ENCODE measurements at regions of chr7 and their contacts with region 1.

Region 1: DNA sequence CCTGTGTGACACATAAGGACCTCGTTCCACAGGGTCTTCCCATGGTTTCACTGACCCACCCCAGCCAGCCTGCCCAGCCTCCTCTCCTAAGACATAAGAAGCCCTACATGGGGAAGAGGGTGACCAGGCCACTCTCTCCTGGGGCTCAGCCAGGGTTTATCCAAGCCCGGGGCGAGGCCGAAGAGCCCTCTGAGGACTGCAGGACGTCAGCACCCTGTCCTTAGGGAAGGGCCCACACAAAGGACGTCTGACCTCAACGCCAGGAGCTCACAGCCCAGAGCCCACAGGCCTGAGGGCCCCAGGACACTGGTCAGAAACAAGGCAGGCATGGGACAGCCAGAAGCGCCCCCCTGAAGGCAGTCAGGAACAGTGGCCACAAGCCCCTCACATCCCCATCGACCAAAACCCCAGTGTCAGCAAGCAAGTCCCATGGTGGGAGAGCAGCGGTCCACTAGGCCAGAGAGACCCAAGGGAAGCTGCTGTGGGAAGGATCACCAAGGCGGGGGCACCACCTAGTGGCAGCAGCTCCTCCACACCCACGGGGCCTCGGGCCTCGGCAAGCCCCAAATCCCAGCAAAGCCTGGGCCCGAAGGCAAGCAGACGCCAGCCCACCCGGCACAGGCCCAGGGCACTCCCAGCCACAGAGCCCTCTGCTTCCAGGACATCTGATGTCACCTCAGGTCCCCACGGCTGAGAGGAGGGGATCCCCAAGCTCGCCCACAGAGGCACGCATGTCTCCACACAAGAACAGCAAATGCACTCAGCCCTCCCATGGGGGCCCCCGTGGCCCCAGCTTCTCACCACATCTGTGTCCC is 23.4 kb downstream of the MAD1L1 start:
- ATAC-seq: peak; percentile 78 to 99 (median 96)
- H3K4me3 ChIP-seq: no peak overlapping the region
- H3K27ac ChIP-seq: no peak overlapping the region
- H3K4me1 ChIP-seq: peaks cover 8 to 12% of the 10 kb centered on the region in 2 donors

Region 2: GRCh38 chr7:1569833-1570633 is 639.3 kb before region 1 on chr7 and contains the start of gene PSMG3:
- in situ Hi-C with region 1: loop called in 3 of 9 experiments (anchors 10 to 25 kb)
- ATAC-seq: peak; percentile 53 to 95 (median 93)
- H3K4me3 ChIP-seq: peak within 1 kb of the TSS; percentile 73 to 95 (median 85)
- H3K27ac ChIP-seq: peak within 1 kb of the TSS; percentile 84 to 88
- H3K4me1 ChIP-seq: peaks cover 16% of the 10 kb centered on the region in 2 donors
- total RNA-seq, gene PSMG3: 24.0 to 52.8 (median 44.8) TPM

Region 3: DNA sequence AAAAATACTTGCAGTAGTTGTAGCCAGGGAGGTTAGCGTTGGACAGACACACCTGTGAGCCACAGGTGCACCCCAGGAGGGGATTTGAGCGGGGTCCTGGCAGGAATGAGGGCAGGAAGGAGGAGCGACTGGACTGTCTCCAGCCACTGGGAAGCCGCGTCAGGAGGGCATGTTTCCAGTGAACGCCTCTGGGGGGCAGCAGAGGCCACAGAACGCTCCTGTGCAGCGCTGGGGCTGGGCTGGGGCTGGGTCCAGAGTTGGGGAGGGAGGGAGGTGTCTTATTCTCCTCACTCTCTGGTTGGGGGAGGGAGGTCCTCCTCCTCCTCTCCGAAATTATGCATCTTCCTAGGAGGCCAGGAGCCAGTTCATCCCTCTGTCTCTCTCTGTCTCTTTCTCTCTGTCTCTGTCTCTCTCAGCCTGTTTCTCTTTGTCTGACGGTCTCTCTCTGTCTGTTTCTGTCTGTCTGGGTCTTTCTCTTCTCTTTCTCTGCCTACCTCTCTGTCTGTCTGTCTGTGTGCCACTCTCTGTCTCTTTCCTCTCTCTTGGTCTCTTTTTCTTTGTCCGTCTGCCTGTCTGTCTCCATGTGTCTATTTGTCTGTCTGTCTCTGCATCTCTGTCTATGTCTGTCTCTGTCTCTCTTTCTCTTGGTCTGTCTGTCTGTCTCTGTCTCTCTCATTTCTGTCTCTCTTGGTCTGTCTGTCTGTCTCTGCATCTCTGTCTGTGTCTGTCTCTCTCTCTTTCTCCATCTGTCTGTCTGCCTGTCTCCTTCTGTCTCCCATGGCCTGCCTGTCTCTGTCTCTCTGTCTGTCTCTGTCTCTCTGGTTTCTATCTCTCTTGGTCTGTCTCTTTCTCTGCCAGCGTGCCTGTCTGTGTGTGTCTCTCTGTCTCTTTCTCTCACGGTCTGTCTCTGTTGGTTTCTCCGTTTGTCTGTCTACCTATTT is 629.6 kb before region 1 on chr7:
- in situ Hi-C with region 1: loop called in 3 of 9 experiments (anchors 10 to 25 kb)
- ATAC-seq: peak; percentile 96 to 100 (median 99)
- H3K4me3 ChIP-seq: no peak overlapping the region
- H3K27ac ChIP-seq: no peak overlapping the region
- H3K4me1 ChIP-seq: peaks cover 4 to 12% of the 10 kb centered on the region in 2 donors

Region 4: GRCh38 chr7:1664711-1665548 is 544.4 kb before region 1 on chr7:
- in situ Hi-C with region 1: loop called in 2 of 9 experiments (anchors 25 kb)
- ATAC-seq: peak; percentile 13 to 62 (median 42)
- H3K4me3 ChIP-seq: peak overlapping the region; percentile 54 to 96 (median 83)
- H3K27ac ChIP-seq: peak overlapping the region; percentile 76 to 94
- H3K4me1 ChIP-seq: peaks cover 21 to 26% of the 10 kb centered on the region in 2 donors

Region 5: GRCh38 chr7:2934211-2934731 is 724.9 kb after region 1 on chr7:
- in situ Hi-C with region 1: no loop called
- ATAC-seq: peak in 4 of 8 experiments; percentile 16 to 81 (median 30)
- H3K4me3 ChIP-seq: no peak overlapping the region
- H3K27ac ChIP-seq: no peak overlapping the region
- H3K4me1 ChIP-seq: peaks cover 26 to 32% of the 10 kb centered on the region in 2 donors

Measured in motor neuron (in vitro differentiated cells).